T-cell (primary cell): ENCODE measurements at regions of chr7 and their contacts with region 1.

Region 1: GRCh38 chr7:151244196-151244840 is 4.2 kb downstream of the SMARCD3 start:
- DNase-seq: peak in 23 of 35 experiments; percentile 30 to 82 (median 48)
- ATAC-seq: no peak
- H3K4me3 ChIP-seq: peak overlapping the region in 1 of 2 donors; percentile 44
- H3K4me3 Mint-ChIP-seq: peak overlapping the region; percentile 65 to 87 (median 72)
- H3K27ac ChIP-seq: no peak overlapping the region
- H3K27ac Mint-ChIP-seq: no peak overlapping the region
- H3K4me1 ChIP-seq: peaks cover 15 to 50% of the 10 kb centered on the region in 2 experiments
- H3K4me1 Mint-ChIP-seq: peaks cover 37 to 50% (median 45%) of the 10 kb centered on the region in 3 donors
- H3K27me3 ChIP-seq: peaks cover 0 to 51% of the 10 kb centered on the region in 2 experiments
- H3K27me3 Mint-ChIP-seq: peaks cover 15 to 23% of the 10 kb centered on the region in 2 donors

Region 2: GRCh38 chr7:150992833-150993302 is 251.4 kb before region 1 on chr7:
- CTCF ChIA-PET with region 1: no interaction called
- POLR2A ChIA-PET with region 1: no interaction called
- DNase-seq: peak in 2 of 35 experiments; percentile 33 to 51
- ATAC-seq: peak in 2 of 4 experiments; percentile 40 to 67
- H3K4me3 ChIP-seq: no peak overlapping the region
- H3K4me3 Mint-ChIP-seq: no peak overlapping the region
- H3K27ac ChIP-seq: no peak overlapping the region
- H3K27ac Mint-ChIP-seq: no peak overlapping the region
- H3K4me1 ChIP-seq: peaks cover 25 to 48% of the 10 kb centered on the region in 2 experiments
- H3K4me1 Mint-ChIP-seq: peaks cover 36 to 45% (median 44%) of the 10 kb centered on the region in 3 donors
- H3K27me3 ChIP-seq: peaks cover 0 to 41% of the 10 kb centered on the region in 2 experiments
- H3K27me3 Mint-ChIP-seq: peaks cover 0 to 6% of the 10 kb centered on the region in 2 donors

Region 3: DNA sequence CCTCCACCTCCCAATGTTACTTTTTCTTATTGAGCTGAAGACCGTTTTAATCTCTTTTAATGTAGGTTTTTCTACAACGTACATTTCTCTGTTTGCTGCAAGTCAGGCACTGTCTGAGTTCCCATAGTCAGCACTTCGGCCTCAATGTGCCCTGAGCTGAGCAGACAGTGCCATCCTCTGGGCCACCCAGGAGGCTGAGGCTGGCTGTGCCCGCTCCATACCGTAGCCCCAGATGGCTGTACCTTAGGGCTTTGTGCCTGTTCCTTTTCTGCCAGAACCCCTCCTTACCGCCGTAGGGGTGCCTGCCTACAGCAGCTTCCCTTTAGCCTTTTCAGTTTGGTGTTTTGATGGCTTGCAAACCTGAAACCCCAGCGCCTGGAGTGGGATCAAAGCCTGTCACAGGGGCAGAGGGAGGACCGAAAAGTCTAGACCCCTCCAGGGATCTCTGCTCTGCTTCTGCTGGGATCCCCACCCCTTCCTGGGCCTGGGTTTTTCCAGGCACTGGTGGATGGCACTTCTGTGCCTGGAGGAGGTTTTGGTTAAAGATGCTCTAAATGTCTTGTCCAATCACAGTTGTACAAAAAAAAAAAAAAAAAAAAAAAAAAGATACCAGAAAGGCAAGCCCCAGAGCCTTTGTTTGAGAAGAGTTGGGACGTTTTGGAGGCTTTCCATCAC is 149.1 kb before region 1 on chr7:
- CTCF ChIA-PET with region 1: no interaction called
- POLR2A ChIA-PET with region 1: no interaction called
- DNase-seq: peak in 1 of 35 experiments; percentile 25
- ATAC-seq: peak in 1 of 4 experiments; percentile 50
- H3K4me3 ChIP-seq: no peak overlapping the region
- H3K4me3 Mint-ChIP-seq: no peak overlapping the region
- H3K27ac ChIP-seq: peak overlapping the region; percentile 29
- H3K27ac Mint-ChIP-seq: no peak overlapping the region
- H3K4me1 ChIP-seq: peaks cover 0 to 10% of the 10 kb centered on the region in 2 experiments
- H3K4me1 Mint-ChIP-seq: peaks cover 0 to 11% (median 8%) of the 10 kb centered on the region in 3 donors
- H3K27me3 ChIP-seq: peaks cover 0 to 1% of the 10 kb centered on the region in 2 experiments
- H3K27me3 Mint-ChIP-seq: no peaks in the 10 kb centered on the region

Region 4: GRCh38 chr7:151123822-151124464 is 120.4 kb before region 1 on chr7:
- CTCF ChIA-PET with region 1: interaction called in 1 of 2 experiments, 17 read pairs
- POLR2A ChIA-PET with region 1: no interaction called
- DNase-seq: peak; percentile 50 to 92 (median 78)
- ATAC-seq: peak; percentile 91 to 96 (median 94)
- H3K4me3 ChIP-seq: no peak overlapping the region
- H3K4me3 Mint-ChIP-seq: no peak overlapping the region
- H3K27ac ChIP-seq: no peak overlapping the region
- H3K27ac Mint-ChIP-seq: no peak overlapping the region
- H3K4me1 ChIP-seq: peaks cover 2 to 9% of the 10 kb centered on the region in 2 experiments
- H3K4me1 Mint-ChIP-seq: peaks cover 6 to 16% (median 7%) of the 10 kb centered on the region in 3 donors
- H3K27me3 ChIP-seq: peaks cover 2 to 3% of the 10 kb centered on the region in 2 experiments
- H3K27me3 Mint-ChIP-seq: no peaks in the 10 kb centered on the region

Region 5: DNA sequence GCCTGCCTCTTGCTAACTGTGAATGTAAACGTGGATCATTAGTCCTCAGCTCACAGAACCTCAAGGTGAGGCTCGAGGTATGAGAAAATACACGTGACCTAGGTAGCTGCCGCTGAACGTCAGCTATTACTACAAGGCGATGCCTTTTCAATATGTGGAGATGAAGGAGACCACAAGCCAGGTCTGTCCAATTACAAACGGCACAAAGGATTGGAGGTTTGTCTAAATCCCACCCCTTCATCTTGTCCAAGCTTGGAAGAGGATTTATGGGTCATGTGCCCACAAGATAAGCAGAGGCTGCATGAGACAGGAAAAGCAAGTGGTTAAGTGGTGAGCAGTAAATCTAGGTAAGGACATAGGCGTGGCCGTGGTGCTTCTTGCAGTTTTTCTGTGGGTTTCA is 37.4 kb before region 1 on chr7:
- CTCF ChIA-PET with region 1: interaction called in 1 of 2 experiments, 26 read pairs
- POLR2A ChIA-PET with region 1: no interaction called
- DNase-seq: peak in 25 of 35 experiments; percentile 10 to 65 (median 23)
- ATAC-seq: peak; percentile 64 to 79 (median 76)
- H3K4me3 ChIP-seq: no peak overlapping the region
- H3K4me3 Mint-ChIP-seq: peak overlapping the region; percentile 22 to 52 (median 51)
- H3K27ac ChIP-seq: peak overlapping the region; percentile 89
- H3K27ac Mint-ChIP-seq: peak overlapping the region; percentile 90 to 91
- H3K4me1 ChIP-seq: peaks cover 3 to 43% of the 10 kb centered on the region in 2 experiments
- H3K4me1 Mint-ChIP-seq: peaks cover 27 to 42% (median 29%) of the 10 kb centered on the region in 3 donors
- H3K27me3 ChIP-seq: peaks cover 0 to 15% of the 10 kb centered on the region in 2 experiments
- H3K27me3 Mint-ChIP-seq: no peaks in the 10 kb centered on the region

Region 6: GRCh38 chr7:151226875-151227782 is 17.2 kb before region 1 on chr7 and contains the start of gene ABCF2:
- CTCF ChIA-PET with region 1: interaction called, 13 to 51 read pairs
- POLR2A ChIA-PET with region 1: interaction called in 1 of 2 experiments, 6 read pairs
- DNase-seq: peak; percentile 95 to 99 (median 97)
- ATAC-seq: peak; percentile 99
- H3K4me3 ChIP-seq: peak within 1 kb of the TSS; percentile 85 to 87
- H3K4me3 Mint-ChIP-seq: peak within 1 kb of the TSS; percentile 94 to 99 (median 97)
- H3K27ac ChIP-seq: peak within 1 kb of the TSS; percentile 66
- H3K27ac Mint-ChIP-seq: peak within 1 kb of the TSS; percentile 93 to 96
- H3K4me1 ChIP-seq: peaks cover 15 to 29% of the 10 kb centered on the region in 2 experiments
- H3K4me1 Mint-ChIP-seq: peaks cover 50 to 53% (median 52%) of the 10 kb centered on the region in 3 donors
- H3K27me3 ChIP-seq: no peaks in the 10 kb centered on the region
- H3K27me3 Mint-ChIP-seq: no peaks in the 10 kb centered on the region
- total RNA-seq, gene ABCF2: 22.9 to 39.7 (median 38.8) TPM

Region 7: GRCh38 chr7:151680721-151681209 is 436.4 kb after region 1 on chr7:
- CTCF ChIA-PET with region 1: no interaction called
- POLR2A ChIA-PET with region 1: no interaction called
- DNase-seq: no peak
- ATAC-seq: no peak
- H3K4me3 ChIP-seq: no peak overlapping the region
- H3K4me3 Mint-ChIP-seq: no peak overlapping the region
- H3K27ac ChIP-seq: no peak overlapping the region
- H3K27ac Mint-ChIP-seq: no peak overlapping the region
- H3K4me1 ChIP-seq: peaks cover 4 to 22% of the 10 kb centered on the region in 2 experiments
- H3K4me1 Mint-ChIP-seq: peaks cover 36 to 56% (median 41%) of the 10 kb centered on the region in 3 donors
- H3K27me3 ChIP-seq: no peaks in the 10 kb centered on the region
- H3K27me3 Mint-ChIP-seq: no peaks in the 10 kb centered on the region

Region 8: GRCh38 chr7:152382244-152382643 is 1137.9 kb after region 1 on chr7:
- CTCF ChIA-PET with region 1: no interaction called
- POLR2A ChIA-PET with region 1: no interaction called
- DNase-seq: no peak
- ATAC-seq: no peak
- H3K4me3 ChIP-seq: no peak overlapping the region
- H3K4me3 Mint-ChIP-seq: no peak overlapping the region
- H3K27ac ChIP-seq: no peak overlapping the region
- H3K27ac Mint-ChIP-seq: no peak overlapping the region
- H3K4me1 ChIP-seq: peaks cover 0 to 2% of the 10 kb centered on the region in 2 experiments
- H3K4me1 Mint-ChIP-seq: peaks cover 42 to 50% (median 45%) of the 10 kb centered on the region in 3 donors
- H3K27me3 ChIP-seq: no peaks in the 10 kb centered on the region
- H3K27me3 Mint-ChIP-seq: no peaks in the 10 kb centered on the region